GM10248 (cell line): ENCODE measurements at regions of chr1 and their contacts with region 1.

Region 1: DNA sequence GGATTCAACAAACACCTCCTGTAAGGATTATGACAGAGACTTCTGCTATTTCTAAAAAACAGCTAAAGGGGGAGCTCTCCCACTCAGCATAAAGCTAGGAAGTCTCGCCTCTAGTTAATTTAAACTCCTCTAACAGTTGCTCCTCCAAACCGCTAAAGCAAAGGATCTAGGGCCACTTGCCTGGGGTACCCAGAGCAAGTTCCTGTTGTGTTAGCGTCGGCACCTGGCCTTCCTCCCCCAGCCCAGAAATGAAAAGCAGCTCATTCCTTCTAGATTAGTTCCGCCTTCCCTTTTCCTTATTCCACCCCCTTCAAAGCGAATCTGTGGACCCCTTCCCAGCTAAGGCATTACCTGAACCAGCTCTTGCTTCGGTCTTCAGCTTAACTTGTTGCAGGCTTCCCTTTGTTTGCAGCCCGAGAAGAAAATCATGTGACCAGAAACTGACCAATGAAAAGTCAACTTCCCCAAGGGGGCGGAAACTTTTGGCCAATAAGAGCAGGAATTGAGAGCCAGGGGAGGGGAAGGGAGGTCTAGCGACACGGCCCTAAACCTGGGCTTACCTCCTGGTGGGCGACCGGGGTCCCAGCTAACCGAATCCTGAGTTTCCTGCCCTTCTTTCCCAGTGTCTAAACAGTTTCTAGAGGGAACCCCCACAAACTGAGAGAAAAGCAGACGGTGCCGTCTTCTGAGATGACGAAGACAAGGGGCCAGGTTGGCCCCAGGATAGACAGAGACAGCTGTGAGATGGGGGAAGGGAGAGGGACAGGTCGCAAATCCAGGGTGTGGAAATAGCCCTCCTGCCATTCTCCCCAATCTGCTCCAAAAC is at the start of gene PBXIP1:
- DNase-seq: peak; percentile 92
- CTCF ChIP-seq: peak; percentile 24

Region 2: DNA sequence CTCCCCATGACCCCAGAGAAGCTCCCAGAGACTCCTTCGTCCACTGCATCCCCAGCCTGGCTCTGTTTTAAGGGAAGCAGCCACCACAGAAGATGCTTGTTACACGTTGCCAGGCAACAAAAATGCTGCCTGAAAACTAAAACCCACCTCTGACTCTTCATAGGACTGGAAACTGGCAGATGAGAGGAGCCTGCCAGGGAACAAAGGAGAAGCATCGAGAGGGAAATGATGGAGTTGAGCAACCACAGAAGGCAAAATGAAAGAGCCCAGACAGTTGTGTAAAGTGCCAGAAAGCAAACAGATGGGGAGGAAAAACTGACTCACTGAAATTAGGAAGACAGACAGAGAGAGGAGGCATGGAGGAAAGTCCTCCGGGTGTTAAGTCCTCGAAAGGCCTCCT is 204.2 kb before region 1 on chr1:
- CTCF ChIA-PET with region 1: no interaction called
- POLR2A ChIA-PET with region 1: no interaction called
- DNase-seq: no peak
- CTCF ChIP-seq: no peak

Region 3: GRCh38 chr1:154819628-154820590 is 136.0 kb before region 1 on chr1:
- CTCF ChIA-PET with region 1: no interaction called
- POLR2A ChIA-PET with region 1: no interaction called
- DNase-seq: peak; percentile 55
- CTCF ChIP-seq: no peak

Region 4: GRCh38 chr1:154974063-154974807 is 18.3 kb after region 1 on chr1 and contains the start of gene CKS1B:
- CTCF ChIA-PET with region 1: interaction called, 51 read pairs
- POLR2A ChIA-PET with region 1: interaction called, 10 read pairs
- DNase-seq: peak; percentile 93
- CTCF ChIP-seq: no peak

Region 5: GRCh38 chr1:155001675-155002463 is 45.9 kb after region 1 on chr1:
- CTCF ChIA-PET with region 1: interaction called, 15 read pairs
- POLR2A ChIA-PET with region 1: interaction called, 3 read pairs
- DNase-seq: peak; percentile 99
- CTCF ChIP-seq: peak; percentile 45